A549 (cell line): ENCODE measurements at regions of chr17 and their contacts with region 1.

Region 1: GRCh38 chr17:67475236-67475937 is 98.3 kb downstream of the PITPNC1 start:
- DNase-seq: peak; percentile 82 to 85
- ATAC-seq: peak; percentile 93 to 96
- H3K4me3 ChIP-seq: no peak overlapping the region
- H3K27ac ChIP-seq: no peak overlapping the region
- H3K4me1 ChIP-seq: no peaks in the 10 kb centered on the region
- CTCF ChIP-seq: peak; percentile 92
- EP300 ChIP-seq: no peak
- POLR2A ChIP-seq: no peak
- RAD21 ChIP-seq: peak; percentile 93 to 95

Region 2: GRCh38 chr17:67335329-67335835 is 140.0 kb before region 1 on chr17:
- CTCF ChIA-PET with region 1: no interaction called
- POLR2A ChIA-PET with region 1: no interaction called
- DNase-seq: no peak
- ATAC-seq: peak in 1 of 2 experiments; percentile 18; a peak in 1 of 6 replicates
- H3K4me3 ChIP-seq: no peak overlapping the region
- H3K27ac ChIP-seq: no peak overlapping the region
- H3K4me1 ChIP-seq: peaks cover 7% of the 10 kb centered on the region
- CTCF ChIP-seq: no peak
- EP300 ChIP-seq: no peak
- POLR2A ChIP-seq: no peak
- RAD21 ChIP-seq: no peak

Region 3: GRCh38 chr17:67411397-67411796 is 64.0 kb before region 1 on chr17:
- CTCF ChIA-PET with region 1: interaction called, 10 read pairs
- POLR2A ChIA-PET with region 1: no interaction called
- DNase-seq: no peak
- ATAC-seq: no peak
- H3K4me3 ChIP-seq: no peak overlapping the region
- H3K27ac ChIP-seq: no peak overlapping the region
- H3K4me1 ChIP-seq: peaks cover 7% of the 10 kb centered on the region; the same call in 2 of the 3 replicates
- CTCF ChIP-seq: no peak
- EP300 ChIP-seq: no peak
- POLR2A ChIP-seq: no peak
- RAD21 ChIP-seq: no peak

Region 4: GRCh38 chr17:67431249-67432048 is 43.9 kb before region 1 on chr17:
- CTCF ChIA-PET with region 1: interaction called, 30 read pairs
- POLR2A ChIA-PET with region 1: no interaction called
- DNase-seq: peak; percentile 45 to 61
- ATAC-seq: peak; percentile 72 to 80; a peak in 5 of 6 replicates
- H3K4me3 ChIP-seq: no peak overlapping the region
- H3K27ac ChIP-seq: peak overlapping the region in 1 of 2 experiments; percentile 58; a peak in 4 of 6 replicates
- H3K4me1 ChIP-seq: peaks cover 10% of the 10 kb centered on the region
- CTCF ChIP-seq: no peak
- EP300 ChIP-seq: no peak
- POLR2A ChIP-seq: no peak
- RAD21 ChIP-seq: no peak

Region 5: DNA sequence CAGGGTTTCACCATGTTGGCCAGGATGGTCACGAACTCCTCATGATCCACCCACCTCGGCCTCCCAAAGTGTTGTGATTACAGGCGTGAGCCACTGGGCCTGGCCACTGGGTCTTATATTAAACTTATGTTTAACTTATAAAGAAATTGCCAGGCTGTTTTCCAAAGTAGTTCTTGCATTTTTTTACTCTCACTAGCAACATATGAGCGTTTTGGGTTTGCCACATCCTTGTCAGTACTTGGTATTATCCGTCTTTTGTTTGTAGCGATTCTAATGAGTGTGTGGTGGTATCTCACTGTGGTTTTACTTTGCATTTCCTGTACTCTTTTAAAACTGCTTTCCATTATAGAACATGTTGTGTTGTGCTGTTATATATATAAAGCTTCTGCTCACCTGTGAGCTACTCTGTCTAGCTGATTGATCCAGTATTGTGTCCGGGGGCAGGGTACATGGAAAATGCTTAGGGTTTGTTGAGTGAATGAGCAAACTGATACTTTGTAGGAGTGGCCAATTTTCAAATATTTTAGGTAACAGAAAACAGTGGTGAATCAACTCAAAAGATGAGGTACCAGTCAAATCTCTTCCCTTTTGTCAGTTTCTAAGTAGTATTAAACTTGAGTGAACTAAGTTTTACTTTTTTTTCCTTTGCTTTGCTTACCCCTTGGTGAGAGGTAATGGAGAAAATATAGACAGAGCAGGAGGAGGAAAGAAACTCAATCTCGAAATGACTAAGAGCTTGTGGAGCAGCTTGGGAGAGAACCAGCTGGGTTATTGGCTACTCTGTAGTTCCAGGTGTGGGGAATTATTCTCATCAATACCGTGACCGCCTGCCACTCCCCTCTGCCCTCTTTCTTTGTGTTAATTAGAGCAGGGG is 22.5 kb before region 1 on chr17:
- CTCF ChIA-PET with region 1: interaction called, 30 read pairs
- POLR2A ChIA-PET with region 1: no interaction called
- DNase-seq: no peak
- ATAC-seq: no peak
- H3K4me3 ChIP-seq: no peak overlapping the region
- H3K27ac ChIP-seq: no peak overlapping the region
- H3K4me1 ChIP-seq: no peaks in the 10 kb centered on the region
- CTCF ChIP-seq: no peak
- EP300 ChIP-seq: no peak
- POLR2A ChIP-seq: no peak
- RAD21 ChIP-seq: no peak

Region 6: GRCh38 chr17:67523101-67523500 is 47.7 kb after region 1 on chr17:
- CTCF ChIA-PET with region 1: interaction called, 10 read pairs
- POLR2A ChIA-PET with region 1: no interaction called
- DNase-seq: no peak
- ATAC-seq: no peak
- H3K4me3 ChIP-seq: no peak overlapping the region
- H3K27ac ChIP-seq: no peak overlapping the region
- H3K4me1 ChIP-seq: no peaks in the 10 kb centered on the region
- CTCF ChIP-seq: no peak
- EP300 ChIP-seq: no peak
- POLR2A ChIP-seq: no peak
- RAD21 ChIP-seq: no peak

Region 7: GRCh38 chr17:67689534-67690177 is 214.3 kb after region 1 on chr17:
- CTCF ChIA-PET with region 1: interaction called, 15 read pairs
- POLR2A ChIA-PET with region 1: no interaction called
- DNase-seq: peak; percentile 69 to 85
- ATAC-seq: peak; percentile 54 to 68; a peak in 2 of 6 replicates
- H3K4me3 ChIP-seq: no peak overlapping the region
- H3K27ac ChIP-seq: no peak overlapping the region
- H3K4me1 ChIP-seq: no peaks in the 10 kb centered on the region
- CTCF ChIP-seq: peak; percentile 93
- EP300 ChIP-seq: no peak
- POLR2A ChIP-seq: no peak
- RAD21 ChIP-seq: peak; percentile 78 to 83